Activated T-helper 1 cell treated with anti-CD3 and anti-CD28 coated beads, Interleukin-12 subunit alpha, Interleukin-12 subunit beta, Interleukin-2, Interleukin-4 antibody, amounts not matched to agents 30 ng/mL and 10 ng/mL and 1 ng/mL, durations not matched to agents 14 hours and 24 hours and 36 hours (primary cell): ENCODE measurements at regions of chr18 and their contacts with region 1.

Region 1: GRCh38 chr18:79378542-79379250 is 17.0 kb upstream of the NFATC1 start:
- DNase-seq: peak; percentile 76
- H3K4me3 Mint-ChIP-seq: no peak overlapping the region
- H3K27ac Mint-ChIP-seq: no peak overlapping the region
- H3K4me1 Mint-ChIP-seq: peaks cover 14% of the 10 kb centered on the region
- H3K27me3 Mint-ChIP-seq: no peaks in the 10 kb centered on the region

Region 2: GRCh38 chr18:79528846-79529245 is 150.2 kb after region 1 on chr18:
- intact Hi-C with region 1: loop called (anchors 1 kb)
- DNase-seq: peak; percentile 64
- H3K4me3 Mint-ChIP-seq: no peak overlapping the region
- H3K27ac Mint-ChIP-seq: no peak overlapping the region
- H3K4me1 Mint-ChIP-seq: peaks cover 20% of the 10 kb centered on the region
- H3K27me3 Mint-ChIP-seq: no peaks in the 10 kb centered on the region